ENCODE measurements at regions of chr3 and their contacts with region 1.

Region 1: GRCh38 chr3:105791919-105792786 is 76.7 kb downstream of the CBLB start:
- DNase-seq: peak; percentile 90
- ATAC-seq: peak; percentile 94

Region 2: DNA sequence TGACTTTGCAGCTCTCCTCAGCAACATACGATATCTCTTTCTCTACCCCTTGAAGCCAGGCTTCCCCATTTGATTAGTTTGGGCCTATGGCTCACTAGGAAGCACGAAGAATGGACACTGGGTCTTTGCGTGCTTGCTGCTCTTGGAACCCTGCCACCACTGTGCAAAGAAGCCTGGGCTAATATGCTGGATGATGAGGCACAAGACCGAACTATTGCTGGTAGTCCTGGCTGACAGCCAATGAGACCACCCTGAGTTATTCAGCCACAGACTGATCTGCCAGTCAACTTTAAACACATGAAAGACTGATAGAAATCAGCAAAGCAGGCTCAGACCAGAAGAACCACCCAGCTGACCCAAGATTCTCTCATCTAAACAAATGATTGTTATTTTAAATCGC is 173.6 kb before region 1 on chr3:
- intact Hi-C with region 1: no loop called
- DNase-seq: no peak
- ATAC-seq: no peak

Region 3: GRCh38 chr3:105823149-105823869 is 31.2 kb after region 1 on chr3:
- intact Hi-C with region 1: loop called (anchors 1 kb)
- DNase-seq: no peak
- ATAC-seq: peak; percentile 45